ENCODE measurements at regions of chr11 and their contacts with region 1.

Region 1: GRCh38 chr11:17864478-17864941 is 129.9 kb downstream of the KCNC1 start:
- DNase-seq: peak; percentile 49
- H3K4me3 Mint-ChIP-seq: no peak overlapping the region
- H3K27ac Mint-ChIP-seq: no peak overlapping the region
- H3K4me1 Mint-ChIP-seq: no peaks in the 10 kb centered on the region
- H3K27me3 Mint-ChIP-seq: no peaks in the 10 kb centered on the region
- CTCF ChIP-seq: peak; percentile 62

Region 2: GRCh38 chr11:17793642-17794170 is 70.8 kb before region 1 on chr11:
- CTCF ChIA-PET with region 1: interaction called, 11 read pairs
- POLR2A ChIA-PET with region 1: no interaction called
- intact Hi-C with region 1: no loop called
- DNase-seq: no peak
- H3K4me3 Mint-ChIP-seq: no peak overlapping the region
- H3K27ac Mint-ChIP-seq: no peak overlapping the region
- H3K4me1 Mint-ChIP-seq: peaks cover 24% of the 10 kb centered on the region
- H3K27me3 Mint-ChIP-seq: no peaks in the 10 kb centered on the region
- CTCF ChIP-seq: no peak

Region 3: GRCh38 chr11:17812091-17812839 is 52.2 kb before region 1 on chr11:
- CTCF ChIA-PET with region 1: interaction called, 11 read pairs
- POLR2A ChIA-PET with region 1: no interaction called
- intact Hi-C with region 1: no loop called
- DNase-seq: no peak
- H3K4me3 Mint-ChIP-seq: no peak overlapping the region
- H3K27ac Mint-ChIP-seq: no peak overlapping the region
- H3K4me1 Mint-ChIP-seq: peaks cover 15% of the 10 kb centered on the region
- H3K27me3 Mint-ChIP-seq: no peaks in the 10 kb centered on the region
- CTCF ChIP-seq: no peak

Region 4: GRCh38 chr11:17839973-17840611 is 24.4 kb before region 1 on chr11:
- CTCF ChIA-PET with region 1: interaction called, 25 read pairs
- POLR2A ChIA-PET with region 1: interaction called, 4 read pairs
- intact Hi-C with region 1: no loop called
- DNase-seq: peak; percentile 65
- H3K4me3 Mint-ChIP-seq: no peak overlapping the region
- H3K27ac Mint-ChIP-seq: peak overlapping the region; percentile 2
- H3K4me1 Mint-ChIP-seq: peaks cover 11% of the 10 kb centered on the region
- H3K27me3 Mint-ChIP-seq: no peaks in the 10 kb centered on the region
- CTCF ChIP-seq: no peak

Region 5: DNA sequence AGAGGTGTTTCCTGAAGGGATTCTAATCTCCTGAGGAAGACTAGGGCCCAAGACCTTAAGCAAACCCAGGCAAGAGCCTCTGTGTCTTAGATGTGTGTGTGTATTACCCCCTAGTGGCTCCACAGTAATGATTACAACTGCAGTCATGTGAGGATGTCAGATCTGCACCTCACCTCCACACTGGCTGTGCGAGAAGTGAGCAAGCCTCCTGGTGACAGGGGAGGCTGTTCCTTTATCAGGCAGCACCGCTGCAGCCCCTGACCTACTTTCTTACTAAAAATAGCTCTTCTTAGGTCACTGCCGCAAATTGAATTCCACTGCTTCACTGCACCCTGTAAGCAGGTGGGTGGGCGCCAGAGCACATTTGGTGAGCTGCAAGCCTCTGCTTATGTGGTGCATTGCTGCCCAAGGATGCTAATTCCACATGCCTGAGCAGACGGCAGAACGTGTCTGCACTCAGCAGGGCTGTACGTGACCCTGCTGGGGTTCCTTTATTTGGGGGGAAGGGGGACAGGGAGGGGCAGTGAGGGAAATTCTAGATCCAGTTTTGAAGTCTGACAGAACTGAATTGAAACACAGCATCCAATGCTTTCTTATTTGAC is 17.6 kb before region 1 on chr11:
- CTCF ChIA-PET with region 1: interaction called, 35 read pairs
- POLR2A ChIA-PET with region 1: interaction called, 4 read pairs
- intact Hi-C with region 1: no loop called
- DNase-seq: peak; percentile 58
- H3K4me3 Mint-ChIP-seq: no peak overlapping the region
- H3K27ac Mint-ChIP-seq: no peak overlapping the region
- H3K4me1 Mint-ChIP-seq: peaks cover 13% of the 10 kb centered on the region
- H3K27me3 Mint-ChIP-seq: no peaks in the 10 kb centered on the region
- CTCF ChIP-seq: no peak

Region 6: GRCh38 chr11:17883946-17884345 is 19.4 kb after region 1 on chr11:
- CTCF ChIA-PET with region 1: interaction called, 11 read pairs
- POLR2A ChIA-PET with region 1: no interaction called
- intact Hi-C with region 1: no loop called
- DNase-seq: no peak
- H3K4me3 Mint-ChIP-seq: no peak overlapping the region
- H3K27ac Mint-ChIP-seq: no peak overlapping the region
- H3K4me1 Mint-ChIP-seq: no peaks in the 10 kb centered on the region
- H3K27me3 Mint-ChIP-seq: no peaks in the 10 kb centered on the region
- CTCF ChIP-seq: no peak

Region 7: DNA sequence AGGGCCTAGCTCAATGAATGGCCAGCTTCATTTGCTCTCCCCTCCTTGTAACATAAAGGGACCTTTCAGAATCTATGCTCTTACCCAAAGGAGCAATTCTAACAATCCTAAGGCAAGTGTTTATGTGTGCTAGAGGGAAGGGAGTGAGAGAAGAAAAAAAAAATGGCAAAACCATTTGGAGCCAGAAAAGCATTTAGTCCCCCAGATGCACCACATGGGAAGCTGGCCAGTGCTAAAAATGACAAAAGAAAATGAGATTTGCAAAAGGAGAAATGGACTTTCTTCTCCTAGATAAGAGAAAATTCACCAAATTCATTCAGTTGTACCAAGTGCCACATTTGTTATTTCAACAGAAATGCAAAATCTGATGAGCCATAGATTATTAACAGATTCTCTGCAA is 95.6 kb after region 1 on chr11:
- CTCF ChIA-PET with region 1: interaction called, 12 read pairs
- POLR2A ChIA-PET with region 1: no interaction called
- intact Hi-C with region 1: no loop called
- DNase-seq: no peak
- H3K4me3 Mint-ChIP-seq: no peak overlapping the region
- H3K27ac Mint-ChIP-seq: no peak overlapping the region
- H3K4me1 Mint-ChIP-seq: no peaks in the 10 kb centered on the region
- H3K27me3 Mint-ChIP-seq: no peaks in the 10 kb centered on the region
- CTCF ChIP-seq: no peak